GM18951 (cell line): ENCODE measurements at regions of chr9 and their contacts with region 1.

Region 1: GRCh38 chr9:34899535-34900158 is 58.4 kb upstream of the PHF24 start:
- POLR2A ChIP-seq: no peak

Region 2: GRCh38 chr9:34948451-34948850 is 48.8 kb after region 1 on chr9:
- in situ Hi-C with region 1: no loop called
- POLR2A ChIP-seq: no peak

Region 3: GRCh38 chr9:34989003-34989945 is 89.6 kb after region 1 on chr9 and contains the start of gene DNAJB5:
- in situ Hi-C with region 1: loop called (anchors 5 kb)
- POLR2A ChIP-seq: peak; percentile 68

Region 4: GRCh38 chr9:35134920-35135319 is 235.3 kb after region 1 on chr9:
- in situ Hi-C with region 1: no loop called
- POLR2A ChIP-seq: no peak